Activated T-helper 2 cell treated with anti-CD3 and anti-CD28 coated beads, Interferon-gamma antibody, Interleukin-2, Interleukin-4, amounts not matched to agents 10 μg/mL and 5 μg/mL and 100 μg/mL, durations not matched to agents 14 hours and 24 hours and 36 hours (primary cell): ENCODE measurements at regions of chr6 and their contacts with region 1.

Region 1: DNA sequence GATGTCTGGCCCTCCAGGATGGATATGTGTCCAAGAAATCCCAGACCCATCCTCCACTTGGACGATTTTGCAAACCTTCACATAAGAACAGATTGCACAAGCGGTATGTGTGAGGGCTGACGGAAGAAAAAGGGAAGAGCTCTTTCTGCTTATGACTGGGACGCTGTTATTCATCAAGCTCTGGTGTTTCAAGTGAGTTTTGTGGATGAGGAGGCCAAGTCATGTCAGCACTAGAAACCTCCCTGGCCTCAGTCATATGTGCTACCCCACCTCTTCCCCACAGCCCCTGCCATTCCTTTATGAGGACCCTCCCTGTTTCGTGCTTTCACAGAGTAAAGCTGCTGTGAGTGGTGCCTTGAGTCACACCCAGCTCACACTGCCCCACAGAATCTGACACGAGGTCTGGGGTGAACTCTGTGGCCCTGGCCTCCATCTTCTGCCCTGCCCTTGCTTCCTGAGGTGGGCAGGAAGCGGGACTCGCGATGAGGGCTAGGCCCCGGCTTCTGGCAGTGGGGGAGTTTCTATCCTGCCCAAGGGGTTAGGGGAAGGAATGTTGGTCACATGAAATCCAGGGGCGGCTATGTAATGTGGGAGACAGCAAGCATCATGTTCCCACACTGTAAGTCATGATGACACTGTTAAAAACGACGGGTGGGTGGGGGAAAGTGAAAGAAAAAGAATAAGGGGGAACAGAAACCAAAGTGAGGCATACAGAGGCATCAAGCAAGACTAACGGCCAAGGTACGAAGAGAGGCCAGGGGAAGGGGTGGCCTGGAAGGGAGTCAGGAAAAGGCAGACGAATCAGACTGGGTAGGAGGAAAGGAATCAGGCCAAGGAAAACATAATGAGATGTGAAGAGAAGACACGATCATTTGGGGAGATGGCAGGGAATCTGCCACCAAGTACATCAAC is 78.1 kb downstream of the PRDM1 start:
- DNase-seq: peak; percentile 57
- H3K4me3 Mint-ChIP-seq: peak overlapping the region; percentile 74
- H3K27ac Mint-ChIP-seq: peak overlapping the region; percentile 93
- H3K4me1 Mint-ChIP-seq: peaks cover 56% of the 10 kb centered on the region
- H3K27me3 Mint-ChIP-seq: no peaks in the 10 kb centered on the region

Region 2: DNA sequence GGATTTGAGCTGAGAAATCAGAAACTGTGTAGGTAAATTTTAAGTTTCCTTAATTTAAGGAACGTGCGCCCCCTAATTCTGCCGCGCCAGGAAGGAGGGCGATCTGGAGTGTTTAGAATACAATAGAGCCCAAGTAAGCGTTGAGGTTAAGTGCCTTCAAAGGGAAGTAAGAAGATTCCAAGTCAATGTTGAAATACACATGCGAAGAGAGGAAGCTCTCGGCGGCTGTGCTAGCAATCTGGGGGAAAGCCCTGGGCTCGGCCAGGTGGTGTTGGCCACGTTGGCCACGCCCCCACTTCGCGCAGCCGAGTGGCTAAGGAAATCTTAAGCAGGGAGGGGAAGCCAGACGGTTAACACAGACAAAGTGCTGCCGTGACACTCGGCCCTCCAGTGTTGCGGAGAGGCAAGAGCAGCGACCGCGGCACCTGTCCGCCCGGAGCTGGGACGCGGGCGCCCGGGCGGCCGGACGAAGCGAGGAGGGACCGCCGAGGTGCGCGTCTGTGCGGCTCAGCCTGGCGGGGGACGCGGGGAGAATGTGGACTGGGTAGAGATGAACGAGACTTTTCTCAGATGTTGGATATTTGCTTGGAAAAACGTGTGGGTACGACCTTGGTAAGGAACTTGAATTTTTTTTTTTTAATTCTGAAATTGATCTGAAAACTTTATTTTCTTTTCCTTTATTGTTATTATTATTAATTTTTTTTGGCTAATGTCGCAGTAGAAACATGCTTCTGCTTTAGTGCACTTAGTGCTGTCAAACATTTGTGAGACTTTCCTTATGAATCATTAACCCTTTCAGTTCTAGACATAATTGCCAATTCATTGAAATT is 78.0 kb before region 1 on chr6 and contains the start of gene PRDM1:
- intact Hi-C with region 1: loop called (anchors 1 kb)
- DNase-seq: peak; percentile 78
- H3K4me3 Mint-ChIP-seq: peak within 1 kb of the TSS; percentile 89
- H3K27ac Mint-ChIP-seq: peak within 1 kb of the TSS; percentile 64
- H3K4me1 Mint-ChIP-seq: peaks cover 76% of the 10 kb centered on the region
- H3K27me3 Mint-ChIP-seq: peaks cover 5% of the 10 kb centered on the region
- total RNA-seq, gene PRDM1: 49.1 and 52.3 TPM in 2 replicates

Region 3: GRCh38 chr6:106125925-106126435 is 38.2 kb before region 1 on chr6:
- intact Hi-C with region 1: loop called (anchors 1 kb)
- DNase-seq: no peak
- H3K4me3 Mint-ChIP-seq: peak overlapping the region; percentile 4
- H3K27ac Mint-ChIP-seq: peak overlapping the region; percentile 88
- H3K4me1 Mint-ChIP-seq: peaks cover 62% of the 10 kb centered on the region
- H3K27me3 Mint-ChIP-seq: no peaks in the 10 kb centered on the region

Region 4: DNA sequence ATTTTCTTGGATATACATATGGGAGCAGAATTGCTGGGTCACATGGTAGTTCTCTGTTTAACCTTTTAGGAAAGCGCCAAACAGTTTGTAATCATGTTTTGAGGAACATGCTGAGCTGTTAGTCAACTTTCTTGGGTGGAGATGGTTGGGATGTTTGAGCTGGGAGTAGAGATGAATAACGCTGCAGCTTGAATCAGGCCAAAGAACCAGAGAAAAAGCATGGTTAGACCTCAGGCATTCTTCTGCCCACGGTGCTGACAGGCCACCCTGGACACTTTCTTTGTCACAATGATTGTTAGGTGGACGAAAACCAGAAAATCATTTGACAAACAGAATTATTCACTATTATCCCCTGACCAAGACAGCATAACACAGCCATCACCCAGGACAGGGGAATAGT is 11.3 kb before region 1 on chr6:
- intact Hi-C with region 1: loop called (anchors 1 kb)
- DNase-seq: no peak
- H3K4me3 Mint-ChIP-seq: no peak overlapping the region
- H3K27ac Mint-ChIP-seq: no peak overlapping the region
- H3K4me1 Mint-ChIP-seq: peaks cover 41% of the 10 kb centered on the region
- H3K27me3 Mint-ChIP-seq: no peaks in the 10 kb centered on the region

Region 5: DNA sequence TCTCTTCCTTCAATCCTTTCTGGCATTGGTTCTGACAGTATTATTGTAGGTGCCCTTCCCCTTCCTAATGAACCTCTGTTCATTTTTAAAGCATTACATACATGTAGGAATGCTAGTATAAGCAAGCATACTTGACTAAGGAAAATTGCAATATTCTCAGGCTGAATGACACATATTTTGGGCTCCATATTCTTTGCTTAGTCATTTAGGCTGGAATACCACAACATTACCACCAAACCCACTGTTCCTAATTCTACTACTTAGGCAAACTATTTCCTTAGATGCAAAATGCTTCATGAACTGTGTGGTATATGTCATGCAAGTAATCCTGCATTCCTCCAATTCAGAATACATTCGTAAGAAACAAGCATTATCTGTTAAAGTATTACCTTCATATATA is 35.8 kb after region 1 on chr6:
- intact Hi-C with region 1: no loop called
- DNase-seq: no peak
- H3K4me3 Mint-ChIP-seq: no peak overlapping the region
- H3K27ac Mint-ChIP-seq: no peak overlapping the region
- H3K4me1 Mint-ChIP-seq: peaks cover 46% of the 10 kb centered on the region
- H3K27me3 Mint-ChIP-seq: no peaks in the 10 kb centered on the region

Region 6: DNA sequence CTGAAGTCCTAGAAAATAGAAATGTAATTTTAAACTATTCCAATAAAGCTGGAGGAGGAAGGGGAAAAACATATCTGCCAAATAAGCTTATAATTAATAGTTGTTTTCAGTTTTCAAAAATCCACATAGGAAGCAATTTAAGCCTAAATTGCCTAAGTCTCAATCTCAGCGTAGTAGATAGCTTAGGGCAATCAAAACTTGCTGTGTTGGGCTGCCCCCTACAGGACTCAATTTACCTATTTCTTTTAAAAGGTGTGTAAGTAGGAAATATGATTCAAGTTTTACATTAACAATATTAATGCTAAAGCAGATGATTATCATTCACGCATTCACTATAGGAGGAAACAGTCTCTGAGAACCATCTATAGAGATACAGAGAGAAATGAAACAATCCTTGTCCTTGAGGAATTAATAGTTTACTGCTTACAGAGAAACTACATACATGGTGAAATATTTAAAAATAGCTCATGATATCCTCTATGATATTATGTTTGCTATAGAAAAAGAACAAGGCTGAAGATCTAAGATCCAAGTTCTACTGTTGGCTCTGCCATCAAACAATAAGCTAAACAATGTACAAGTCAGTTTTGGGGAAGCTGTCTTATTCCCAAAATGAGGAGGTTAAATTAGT is 59.2 kb after region 1 on chr6:
- intact Hi-C with region 1: loop called (anchors 1 kb)
- DNase-seq: peak; percentile 48
- H3K4me3 Mint-ChIP-seq: no peak overlapping the region
- H3K27ac Mint-ChIP-seq: no peak overlapping the region
- H3K4me1 Mint-ChIP-seq: peaks cover 44% of the 10 kb centered on the region
- H3K27me3 Mint-ChIP-seq: no peaks in the 10 kb centered on the region